ENCODE measurements at regions of chr17 and their contacts with region 1.

Region 1: DNA sequence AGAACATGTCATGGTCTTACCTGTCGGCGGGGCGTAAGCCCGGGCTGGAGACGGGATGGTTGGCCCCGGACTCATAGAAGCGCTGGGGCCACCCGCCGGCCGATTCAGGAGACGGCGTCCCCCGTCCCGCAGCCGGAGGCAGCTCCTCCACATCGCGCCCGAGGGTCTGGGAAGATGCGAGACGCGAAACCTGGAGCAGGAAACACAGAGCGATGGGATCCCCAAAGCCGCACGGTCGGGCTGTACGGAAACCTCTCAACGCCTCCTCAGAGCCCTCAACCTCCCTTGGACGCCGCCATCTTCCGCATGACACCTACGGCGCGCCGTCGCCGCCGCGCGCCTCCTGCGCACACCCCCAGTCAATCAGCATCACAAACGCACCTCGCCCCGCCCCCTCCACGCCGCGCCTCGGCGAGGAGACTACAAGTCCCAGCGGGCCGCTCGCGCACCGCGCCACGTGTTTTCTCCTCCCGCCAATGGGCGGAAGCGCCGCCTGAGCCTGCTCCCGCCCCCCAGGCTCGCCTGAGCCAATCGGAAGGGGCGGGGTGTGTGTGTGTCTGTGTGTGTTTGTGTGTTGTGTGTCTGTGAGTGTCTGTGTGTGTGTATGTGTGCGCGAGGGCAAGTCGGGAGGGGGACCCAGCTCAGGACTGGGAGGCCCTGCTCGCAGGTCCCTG is at the starts of genes ATPAF2 and GID4:
- DNase-seq: peak; percentile 100
- ATAC-seq: peak; percentile 97
- total RNA-seq, gene ATPAF2: 34.1 TPM
- total RNA-seq, gene GID4: 18.9 TPM

Region 2: DNA sequence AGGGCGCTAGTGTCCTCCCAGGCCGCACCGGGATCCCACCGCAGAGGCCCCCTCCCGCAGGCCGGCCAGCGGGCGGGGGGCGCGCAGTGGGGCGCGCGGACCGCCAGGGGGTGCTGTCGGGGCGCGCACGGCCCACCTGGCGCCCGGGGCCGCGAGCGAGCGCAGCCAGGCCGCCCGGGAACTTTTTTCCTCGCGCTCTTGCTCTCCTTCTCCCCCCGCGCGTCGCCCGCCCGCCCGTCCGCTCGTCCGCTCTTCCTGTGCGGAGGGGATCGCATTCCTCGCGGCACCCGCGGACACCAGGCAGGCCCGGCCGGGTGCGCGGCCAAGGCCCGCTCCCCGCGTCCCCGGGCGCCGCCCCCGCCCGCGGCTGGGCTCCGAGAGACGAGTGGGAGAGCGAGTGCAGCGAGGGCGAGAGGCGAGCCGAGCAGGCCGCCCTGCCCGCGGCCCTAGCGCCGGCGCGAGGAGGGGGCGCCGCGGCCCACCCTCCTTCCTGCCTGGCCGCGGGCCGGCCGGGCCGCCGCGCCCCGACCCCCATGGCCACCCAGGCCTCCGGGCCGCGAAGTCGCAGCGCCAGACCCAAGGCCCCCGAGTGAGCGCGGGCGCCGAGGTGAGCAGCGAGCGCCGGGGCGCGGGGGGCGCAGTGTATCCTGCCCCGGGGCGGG is 357.7 kb before region 1 on chr17 and contains the start of gene RAI1:
- intact Hi-C with region 1: loop called (anchors 5 kb)
- DNase-seq: peak; percentile 86
- ATAC-seq: peak; percentile 75
- total RNA-seq, gene RAI1: 28.3 TPM

Region 3: GRCh38 chr17:17839791-17840707 is 198.9 kb before region 1 on chr17:
- intact Hi-C with region 1: no loop called
- DNase-seq: peak; percentile 93
- ATAC-seq: peak; percentile 73

Region 4: DNA sequence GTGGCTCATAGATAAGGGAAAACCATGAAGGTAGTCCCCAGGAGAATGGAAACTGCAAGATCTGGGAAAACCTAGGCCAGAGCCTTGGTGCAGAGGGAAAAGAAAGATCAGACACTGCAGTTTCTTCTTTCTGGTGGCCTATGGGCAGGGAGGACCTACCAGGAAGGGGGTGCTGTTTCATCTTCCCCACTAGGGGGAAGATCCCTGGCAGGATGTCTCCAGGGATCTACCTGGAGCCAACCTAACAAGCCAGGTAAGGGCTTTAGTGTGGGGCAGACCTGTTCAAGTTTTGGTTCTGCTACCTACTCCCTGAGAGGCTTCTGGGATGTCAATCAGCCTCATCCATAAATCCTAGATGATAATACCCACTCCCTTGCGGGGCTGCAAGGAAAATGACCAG is 88.2 kb before region 1 on chr17:
- intact Hi-C with region 1: no loop called
- DNase-seq: no peak
- ATAC-seq: no peak

Region 5: GRCh38 chr17:17972126-17972951 is 66.7 kb before region 1 on chr17 and contains the starts of genes DRC3 and TOM1L2:
- intact Hi-C with region 1: loop called (anchors 10 kb)
- DNase-seq: peak; percentile 100
- ATAC-seq: peak; percentile 96
- total RNA-seq, gene DRC3: 1.4 TPM
- total RNA-seq, gene TOM1L2: 253 TPM

Measured in Right ventricle myocardium superior (tissue), 1 donor.